Aorta (tissue), 5 donors: ENCODE measurements at regions of chr12 and their contacts with region 1.

Region 1: GRCh38 chr12:51341259-51342007 is 5.0 kb downstream of the CELA1 start:
- DNase-seq: peak in 1 of 2 donors; percentile 78
- ATAC-seq: peak; percentile 87
- H3K4me3 ChIP-seq: no peak overlapping the region
- H3K27ac ChIP-seq: no peak overlapping the region
- H3K4me1 ChIP-seq: no peaks in the 10 kb centered on the region
- H3K27me3 ChIP-seq: no peaks in the 10 kb centered on the region

Region 2: DNA sequence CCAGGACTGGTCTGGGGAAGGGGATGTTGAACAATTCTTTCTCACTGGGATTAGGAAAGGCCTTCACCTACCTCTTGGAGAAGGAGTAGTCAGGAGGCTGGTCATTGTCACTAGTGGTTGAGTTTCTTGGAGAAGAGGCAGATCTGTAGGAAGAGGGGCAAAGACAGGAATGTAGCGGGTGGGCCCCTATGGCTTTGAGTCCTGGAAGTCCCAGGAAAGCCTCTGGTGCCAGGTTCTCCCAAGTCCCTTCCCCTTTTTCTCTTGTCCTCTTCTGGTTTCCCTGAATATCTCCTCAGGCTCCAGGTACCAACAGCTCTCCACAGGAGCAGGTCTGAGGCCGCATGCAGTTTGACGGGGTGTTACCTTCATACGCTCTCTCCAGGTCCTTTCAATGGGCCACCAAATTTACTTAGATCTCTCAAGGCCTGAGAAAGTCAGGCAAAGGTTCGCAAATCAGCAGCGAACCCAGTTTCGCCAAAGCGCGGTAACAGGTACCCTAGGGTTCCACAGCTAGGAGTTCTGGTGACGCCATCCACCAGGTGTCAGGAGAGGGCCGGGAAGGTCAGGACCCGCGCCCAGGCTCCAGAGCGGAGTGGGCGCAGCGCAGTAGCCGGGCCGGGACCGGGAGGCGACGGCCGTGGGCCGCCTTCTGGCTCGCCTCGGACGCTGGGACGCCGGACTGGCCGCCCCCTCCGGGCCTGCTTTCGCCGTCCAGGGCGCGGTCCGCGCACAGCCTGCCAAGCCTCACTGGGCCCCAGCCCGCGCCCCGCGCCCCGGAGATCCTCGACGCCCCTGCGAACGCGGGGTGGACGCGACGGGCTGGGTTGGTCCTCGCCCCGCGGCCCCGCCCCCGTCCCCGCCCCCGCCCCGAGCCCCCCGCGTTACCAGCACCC is 72.0 kb before region 1 on chr12:
- intact Hi-C with region 1: loop called in 1 of 2 experiments (anchors 5 kb)
- DNase-seq: peak; percentile 46 to 77
- ATAC-seq: peak; percentile 37
- H3K4me3 ChIP-seq: peak overlapping the region; percentile 37 to 87
- H3K27ac ChIP-seq: no peak overlapping the region
- H3K4me1 ChIP-seq: no peaks in the 10 kb centered on the region
- H3K27me3 ChIP-seq: no peaks in the 10 kb centered on the region

Region 3: GRCh38 chr12:51388069-51388799 is 46.8 kb after region 1 on chr12:
- intact Hi-C with region 1: no loop called
- DNase-seq: peak; percentile 55 to 78
- ATAC-seq: no peak
- H3K4me3 ChIP-seq: no peak overlapping the region
- H3K27ac ChIP-seq: no peak overlapping the region
- H3K4me1 ChIP-seq: no peaks in the 10 kb centered on the region
- H3K27me3 ChIP-seq: no peaks in the 10 kb centered on the region